IMR-90 (cell line): ENCODE measurements at regions of chr7 and their contacts with region 1.

Region 1: GRCh38 chr7:156560075-156560474 is 80.5 kb upstream of the RNF32 start:
- DNase-seq: no peak
- ATAC-seq: no peak
- H3K4me3 ChIP-seq: no peak overlapping the region
- H3K27ac ChIP-seq: no peak overlapping the region
- H3K4me1 ChIP-seq: no peaks in the 10 kb centered on the region
- H3K27me3 ChIP-seq: no peaks in the 10 kb centered on the region
- CTCF ChIP-seq: no peak
- POLR2A ChIP-seq: no peak
- RAD21 ChIP-seq: no peak

Region 2: DNA sequence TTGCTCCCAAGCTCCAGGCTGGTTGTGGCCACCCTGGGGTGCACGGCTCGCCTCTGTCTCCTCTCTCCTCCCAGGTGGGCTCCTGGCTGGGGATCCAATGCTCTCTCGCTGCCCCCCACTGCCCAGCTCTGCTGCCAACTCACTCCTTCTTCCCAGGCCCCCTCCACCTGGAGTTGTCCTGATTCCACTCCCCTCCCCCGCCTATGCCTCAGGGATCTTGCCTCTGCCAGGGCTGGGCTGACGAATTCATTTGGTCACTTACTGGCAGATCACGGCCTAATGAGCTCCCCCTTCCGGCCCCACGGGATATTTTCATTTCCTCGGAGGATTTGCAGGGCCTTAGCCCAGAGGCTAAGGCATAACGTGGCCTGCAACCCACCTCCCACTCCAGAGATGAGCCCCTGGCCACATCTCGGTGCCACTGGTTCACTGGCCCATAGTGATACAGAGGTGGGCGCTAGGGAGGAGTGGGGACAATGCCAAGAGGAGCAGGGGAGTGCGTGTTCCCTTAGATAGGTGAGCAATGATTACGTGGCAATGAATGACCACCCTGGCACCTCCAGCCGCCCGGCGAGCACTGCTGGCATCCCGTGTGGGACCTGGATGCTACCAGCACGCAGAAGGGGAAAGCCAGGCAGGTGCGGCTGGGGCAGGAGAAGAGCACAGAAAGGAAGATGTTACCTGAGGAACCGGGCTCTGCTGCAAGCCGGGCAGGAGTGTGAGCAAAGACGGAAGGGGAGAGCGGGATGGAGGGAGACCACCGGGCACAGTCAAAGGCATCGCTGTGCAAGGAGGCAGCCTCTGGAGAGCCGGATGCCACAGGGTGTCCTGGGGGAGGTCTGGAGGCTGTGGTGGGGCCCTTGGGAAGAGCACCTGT is 403.1 kb before region 1 on chr7:
- CTCF ChIA-PET with region 1: no interaction called
- POLR2A ChIA-PET with region 1: no interaction called
- dilution Hi-C with region 1: no loop called
- in situ Hi-C with region 1: no loop called
- intact Hi-C with region 1: no loop called
- DNase-seq: no peak
- ATAC-seq: no peak
- H3K4me3 ChIP-seq: no peak overlapping the region
- H3K27ac ChIP-seq: no peak overlapping the region
- H3K4me1 ChIP-seq: no peaks in the 10 kb centered on the region
- H3K27me3 ChIP-seq: no peaks in the 10 kb centered on the region
- CTCF ChIP-seq: no peak
- POLR2A ChIP-seq: no peak
- RAD21 ChIP-seq: no peak

Region 3: DNA sequence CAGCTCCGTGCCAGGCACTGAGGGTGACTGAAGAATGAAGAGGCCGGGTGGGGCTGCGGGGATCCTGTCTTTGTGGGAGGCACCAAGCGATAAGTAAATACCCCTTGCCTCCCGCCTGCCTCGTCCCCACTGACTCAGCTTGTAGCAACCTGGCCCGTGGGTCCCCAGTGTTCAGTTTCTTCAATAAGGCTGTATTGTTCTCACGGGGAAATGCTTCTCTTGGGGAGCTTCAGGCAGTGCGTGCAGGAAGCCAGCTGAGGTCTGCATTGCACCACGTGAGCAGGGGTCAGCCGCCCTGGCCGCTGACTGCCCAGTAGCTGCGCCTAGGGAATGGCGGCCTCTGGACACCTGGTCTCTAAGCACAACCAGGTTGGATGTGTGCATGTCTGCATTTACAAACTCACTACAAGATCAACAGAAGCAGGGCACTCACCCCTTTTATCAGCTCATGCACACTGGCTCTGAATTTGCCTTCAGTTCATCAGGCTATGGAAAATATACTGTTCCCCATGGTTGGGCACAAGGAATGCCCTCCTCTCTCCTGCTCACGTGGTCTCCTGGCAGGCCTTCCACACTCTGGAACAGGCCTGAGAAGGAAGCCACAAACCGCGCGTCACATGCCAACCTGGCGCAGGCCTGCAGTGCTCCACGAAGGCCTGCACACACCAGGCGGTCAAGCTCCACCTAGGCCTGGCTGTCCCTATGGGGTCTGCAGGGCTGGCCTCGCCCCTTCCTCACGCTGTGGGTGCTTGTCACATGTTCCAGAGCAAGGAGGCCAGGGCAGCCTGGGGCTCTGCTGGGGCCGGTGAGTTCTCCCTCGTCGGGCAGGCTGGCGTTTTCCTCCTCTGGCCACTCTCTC is 55.2 kb before region 1 on chr7:
- CTCF ChIA-PET with region 1: no interaction called
- POLR2A ChIA-PET with region 1: no interaction called
- dilution Hi-C with region 1: no loop called
- in situ Hi-C with region 1: no loop called
- intact Hi-C with region 1: loop called (anchors 10 kb)
- DNase-seq: no peak
- ATAC-seq: no peak
- H3K4me3 ChIP-seq: no peak overlapping the region
- H3K27ac ChIP-seq: no peak overlapping the region
- H3K4me1 ChIP-seq: no peaks in the 10 kb centered on the region
- H3K27me3 ChIP-seq: no peaks in the 10 kb centered on the region
- CTCF ChIP-seq: no peak
- POLR2A ChIP-seq: no peak
- RAD21 ChIP-seq: no peak

Region 4: DNA sequence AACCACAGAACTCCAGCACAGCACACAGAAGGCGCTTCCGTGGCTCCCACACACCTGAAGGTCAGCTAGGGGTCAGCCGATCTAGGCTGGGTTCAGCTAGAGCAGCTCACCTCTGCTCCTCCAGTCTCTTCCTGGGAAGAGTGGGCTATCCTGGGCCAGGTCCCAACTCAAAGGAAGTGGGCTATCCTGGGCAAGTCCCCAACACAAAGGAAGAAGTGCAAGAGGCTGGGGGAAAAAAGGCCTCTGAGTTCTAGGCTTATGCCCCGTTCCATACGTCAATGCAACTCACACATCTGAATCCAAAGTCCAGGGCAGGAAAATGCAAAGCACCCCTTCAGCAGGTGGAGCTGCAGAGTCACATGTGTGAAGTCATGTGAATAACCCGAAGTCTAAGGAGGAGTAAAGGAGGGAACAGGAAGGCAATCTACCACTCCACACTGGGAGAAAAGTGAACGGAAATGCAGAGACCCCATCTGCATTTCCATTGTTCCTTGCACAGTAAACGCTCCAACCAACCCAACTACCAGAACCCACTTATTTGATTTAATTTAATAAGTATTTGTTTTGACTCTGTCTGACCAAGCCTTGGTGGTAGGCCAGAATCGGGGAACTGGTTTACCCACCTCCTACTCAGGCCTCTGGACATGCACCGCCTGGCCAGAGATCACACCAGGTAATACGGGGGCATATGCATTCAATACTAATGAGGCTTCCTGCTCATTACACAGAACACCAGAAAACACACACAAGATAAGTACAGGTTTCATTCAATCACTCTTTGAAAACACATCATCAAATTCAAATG is 15.0 kb before region 1 on chr7:
- CTCF ChIA-PET with region 1: no interaction called
- POLR2A ChIA-PET with region 1: interaction called, 12 read pairs
- dilution Hi-C with region 1: no loop called
- in situ Hi-C with region 1: no loop called
- intact Hi-C with region 1: no loop called
- DNase-seq: no peak
- ATAC-seq: no peak
- H3K4me3 ChIP-seq: no peak overlapping the region
- H3K27ac ChIP-seq: no peak overlapping the region
- H3K4me1 ChIP-seq: no peaks in the 10 kb centered on the region
- H3K27me3 ChIP-seq: no peaks in the 10 kb centered on the region
- CTCF ChIP-seq: no peak
- POLR2A ChIP-seq: no peak
- RAD21 ChIP-seq: no peak

Region 5: DNA sequence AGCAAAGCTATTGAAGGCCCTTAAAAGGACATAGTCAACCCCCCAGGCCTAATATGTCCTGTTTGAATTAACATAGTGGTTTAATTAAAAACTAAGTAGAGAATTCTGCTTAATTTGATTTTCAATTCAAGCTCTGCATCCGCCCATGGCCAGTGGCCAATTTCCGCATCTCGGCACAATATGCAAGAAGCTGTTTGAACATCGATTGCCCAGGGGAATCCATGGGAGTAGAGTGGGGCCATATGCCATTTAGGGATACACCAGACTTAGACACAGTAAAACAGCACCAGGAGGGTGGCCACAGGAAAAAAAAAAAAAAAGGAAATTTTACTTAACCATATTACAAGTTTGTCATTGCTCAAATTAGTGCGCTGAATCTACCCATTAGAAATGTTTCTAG is 232.5 kb after region 1 on chr7:
- CTCF ChIA-PET with region 1: no interaction called
- POLR2A ChIA-PET with region 1: no interaction called
- dilution Hi-C with region 1: no loop called
- in situ Hi-C with region 1: no loop called
- intact Hi-C with region 1: no loop called
- DNase-seq: no peak
- ATAC-seq: no peak
- H3K4me3 ChIP-seq: no peak overlapping the region
- H3K27ac ChIP-seq: no peak overlapping the region
- H3K4me1 ChIP-seq: no peaks in the 10 kb centered on the region
- H3K27me3 ChIP-seq: no peaks in the 10 kb centered on the region
- CTCF ChIP-seq: no peak
- POLR2A ChIP-seq: no peak
- RAD21 ChIP-seq: no peak